Left colon (tissue), 2 donors: ENCODE measurements at regions of chr16 and their contacts with region 1.

Region 1: GRCh38 chr16:66483689-66484481 is 56.8 kb downstream of the BEAN1 start:
- DNase-seq: peak; percentile 58 to 78
- ATAC-seq: peak; percentile 84

Region 2: GRCh38 chr16:66406534-66407221 is 77.2 kb before region 1 on chr16:
- intact Hi-C with region 1: loop called in 1 of 2 experiments (anchors 10 kb)
- DNase-seq: peak; percentile 74 to 93
- ATAC-seq: peak; percentile 87

Region 3: GRCh38 chr16:66427036-66427860 is 56.6 kb before region 1 on chr16 and contains the start of gene BEAN1:
- intact Hi-C with region 1: no loop called
- DNase-seq: peak in 1 of 2 donors; percentile 24
- ATAC-seq: peak; percentile 83
- total RNA-seq, gene BEAN1: not detected